ENCODE measurements at regions of chr4 and their contacts with region 1.

Region 1: GRCh38 chr4:48445704-48446103 is 37.4 kb upstream of the SLC10A4 start:
- DNase-seq: no peak
- H3K4me3 ChIP-seq: peak overlapping the region in 1 of 59 donors; percentile 29
- H3K27ac ChIP-seq: no peak overlapping the region
- H3K27me3 ChIP-seq: no peaks in the 10 kb centered on the region
- CTCF ChIP-seq: peak; percentile 45 to 79 (median 69)

Region 2: GRCh38 chr4:48546336-48546735 is 100.6 kb after region 1 on chr4:
- intact Hi-C with region 1: loop called in 1 of 2 experiments (anchors 5 kb)
- DNase-seq: peak in 4 of 10 donors; percentile 8 to 55 (median 36)
- H3K4me3 ChIP-seq: no peak overlapping the region
- H3K27ac ChIP-seq: peak overlapping the region in 4 of 59 donors; percentile 7 to 51 (median 16)
- H3K27me3 ChIP-seq: no peaks in the 10 kb centered on the region
- CTCF ChIP-seq: peak; percentile 25 to 76 (median 62)

Region 3: GRCh38 chr4:48830706-48831531 is 385.2 kb after region 1 on chr4 and contains the start of gene OCIAD1:
- intact Hi-C with region 1: loop called in 1 of 2 experiments (anchors 5 kb)
- DNase-seq: peak; percentile 96 to 99 (median 98)
- H3K4me3 ChIP-seq: peak within 1 kb of the TSS; percentile 63 to 99 (median 88)
- H3K27ac ChIP-seq: peak within 1 kb of the TSS; percentile 76 to 99 (median 94)
- H3K27me3 ChIP-seq: no peaks in the 10 kb centered on the region
- CTCF ChIP-seq: peak in 28 of 56 donors; percentile 6 to 44 (median 24)
- total RNA-seq, gene OCIAD1: 135 to 352 (median 263) TPM

Region 4: DNA sequence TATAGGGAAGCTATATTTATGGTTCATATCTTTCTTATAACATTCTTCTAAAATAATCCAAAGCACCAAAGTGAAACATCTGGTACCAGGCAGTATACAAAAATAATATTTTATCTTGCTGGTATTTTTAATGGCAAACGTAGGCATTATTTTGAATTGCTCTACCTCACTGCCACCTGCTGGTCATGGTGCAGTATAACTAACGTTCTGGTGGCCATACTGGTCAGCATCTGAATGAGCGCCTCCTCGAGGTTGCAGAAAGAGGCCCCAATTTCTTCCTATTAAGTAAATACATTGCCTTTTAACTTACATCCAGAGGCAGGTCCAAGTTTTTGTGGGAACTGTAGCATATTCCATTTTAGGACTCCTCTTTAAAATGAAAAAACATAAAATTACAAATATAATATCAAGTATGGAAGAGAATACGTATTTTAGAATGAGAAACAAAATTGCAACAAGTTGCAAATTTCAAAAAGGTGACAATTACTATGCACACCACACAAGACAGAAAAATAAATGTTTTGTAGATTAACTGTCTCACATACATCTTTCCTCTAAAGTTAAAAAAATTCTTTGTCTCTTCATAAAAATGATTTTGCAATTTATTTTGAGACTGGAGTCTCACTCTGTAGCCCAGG is 517.5 kb after region 1 on chr4:
- intact Hi-C with region 1: loop called (anchors 5 kb)
- DNase-seq: peak; percentile 33 to 78 (median 60)
- H3K4me3 ChIP-seq: no peak overlapping the region
- H3K27ac ChIP-seq: no peak overlapping the region
- H3K27me3 ChIP-seq: no peaks in the 10 kb centered on the region
- CTCF ChIP-seq: peak; percentile 82 to 100 (median 98)